ENCODE measurements at regions of chrX and their contacts with region 1.

Region 1: GRCh38 chrX:129678614-129679195 is 23.9 kb upstream of the APLN start:
- DNase-seq: no peak
- H3K4me3 ChIP-seq: peak overlapping the region; percentile 26
- CTCF ChIP-seq: no peak

Region 2: DNA sequence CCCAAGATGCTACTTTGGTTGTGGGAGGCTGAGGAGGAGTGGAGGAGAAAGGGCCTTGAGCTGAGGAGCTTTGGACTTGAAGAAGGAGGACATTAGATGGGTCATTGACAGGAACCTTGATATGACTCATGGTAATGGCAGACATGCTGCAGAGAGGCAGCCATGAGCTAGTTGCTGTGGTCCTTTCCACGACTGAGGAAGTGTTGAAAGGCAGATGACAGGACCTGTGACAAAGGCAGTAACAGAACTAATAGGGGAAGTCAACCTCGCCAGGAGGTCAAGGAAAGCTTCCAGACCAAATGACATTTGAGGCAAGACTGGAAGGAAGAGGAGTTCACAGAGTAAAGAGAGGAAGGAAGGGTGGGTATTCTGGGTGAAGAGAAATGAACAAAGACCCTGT is 52.5 kb after region 1 on chrX:
- in situ Hi-C with region 1: loop called (anchors 5 kb)
- DNase-seq: no peak
- H3K4me3 ChIP-seq: no peak overlapping the region
- CTCF ChIP-seq: no peak

Measured in astrocyte of the cerebellum (primary cell).